ENCODE measurements at regions of chr4 and their contacts with region 1.

Region 1: GRCh38 chr4:20430259-20430941 is 178.7 kb downstream of the SLIT2 start:
- DNase-seq: no peak
- H3K4me3 ChIP-seq: no peak overlapping the region
- CTCF ChIP-seq: no peak
- POLR2A ChIP-seq: no peak

Region 2: GRCh38 chr4:20464381-20464780 is 34.0 kb after region 1 on chr4:
- intact Hi-C with region 1: loop called (anchors 1 kb)
- DNase-seq: no peak
- H3K4me3 ChIP-seq: no peak overlapping the region
- CTCF ChIP-seq: no peak
- POLR2A ChIP-seq: no peak

Region 3: DNA sequence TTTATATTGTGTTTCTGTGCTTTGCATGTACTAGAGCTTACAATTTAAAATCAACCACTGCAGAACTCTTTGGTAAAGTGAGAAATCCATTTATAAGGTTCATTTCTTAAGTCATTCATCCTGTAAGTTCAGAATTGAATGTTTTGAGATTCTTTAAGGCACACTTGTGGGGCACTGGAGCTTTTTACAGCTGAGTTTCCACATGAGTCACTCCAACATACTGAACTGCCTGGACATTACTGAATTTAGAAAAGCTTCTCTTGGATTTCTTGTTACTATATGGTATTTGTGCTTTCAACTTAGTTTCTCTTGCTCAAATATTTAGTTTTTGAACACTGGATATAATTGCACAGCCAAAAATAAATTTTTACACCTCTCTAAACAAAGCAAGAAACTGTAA is 496.1 kb after region 1 on chr4:
- intact Hi-C with region 1: no loop called
- DNase-seq: no peak
- H3K4me3 ChIP-seq: no peak overlapping the region
- CTCF ChIP-seq: no peak
- POLR2A ChIP-seq: no peak

Measured in lower leg skin (tissue), 4 donors.